ENCODE measurements at regions of chr15 and their contacts with region 1.

Region 1: GRCh38 chr15:51982013-51982769 is 10.6 kb upstream of the LEO1 start:
- DNase-seq: peak; percentile 57
- H3K4me3 Mint-ChIP-seq: peak overlapping the region; percentile 76
- H3K27ac Mint-ChIP-seq: peak overlapping the region; percentile 87
- H3K4me1 Mint-ChIP-seq: peaks cover 13% of the 10 kb centered on the region
- H3K27me3 Mint-ChIP-seq: peaks cover 3% of the 10 kb centered on the region

Region 2: GRCh38 chr15:52005748-52006701 is 23.8 kb after region 1 on chr15:
- intact Hi-C with region 1: loop called (anchors 1 kb)
- DNase-seq: no peak
- H3K4me3 Mint-ChIP-seq: peak overlapping the region; percentile 28
- H3K27ac Mint-ChIP-seq: peak overlapping the region; percentile 80
- H3K4me1 Mint-ChIP-seq: peaks cover 70% of the 10 kb centered on the region
- H3K27me3 Mint-ChIP-seq: no peaks in the 10 kb centered on the region

Region 3: DNA sequence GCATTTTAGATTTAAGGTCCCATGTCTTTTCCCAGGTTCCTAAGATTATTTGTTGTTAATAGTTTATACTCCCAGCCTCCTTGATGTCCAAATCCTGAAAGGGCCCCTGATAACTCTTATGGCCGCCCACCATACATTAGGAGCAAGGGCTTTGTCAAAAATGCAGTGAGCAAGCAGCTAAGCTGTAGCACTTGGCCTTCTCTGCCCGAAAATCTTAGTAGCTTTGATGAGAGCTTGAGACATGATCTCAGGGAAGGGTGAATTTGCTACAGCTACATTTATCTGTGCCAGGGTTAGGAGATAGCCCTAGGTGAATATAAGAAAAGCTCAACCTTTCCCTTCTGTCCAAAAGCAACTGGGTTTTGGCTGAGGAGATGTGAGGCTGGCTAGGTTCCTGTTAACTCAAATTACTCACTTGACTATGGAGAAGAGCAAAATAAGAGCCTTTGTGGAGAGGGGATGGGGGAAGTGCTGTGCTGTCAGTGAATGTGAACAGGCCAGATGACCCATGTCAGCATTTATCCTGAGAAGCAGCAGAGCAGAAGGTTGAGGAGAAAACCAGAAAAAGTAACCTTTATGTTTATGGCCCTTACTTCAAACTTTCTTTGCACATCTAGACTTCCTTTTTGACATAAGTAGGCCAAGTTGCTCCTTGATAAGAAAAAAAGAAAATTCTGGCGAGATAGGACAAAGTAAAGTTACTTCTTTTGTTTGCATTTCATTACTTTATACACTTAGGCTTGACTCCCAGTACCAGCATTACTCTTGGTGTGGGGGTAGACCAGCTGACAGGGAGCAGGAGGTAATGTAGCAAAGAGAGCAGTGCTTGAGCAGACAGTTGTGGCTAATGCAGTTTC is 58.0 kb after region 1 on chr15:
- intact Hi-C with region 1: loop called (anchors 1 kb)
- DNase-seq: no peak
- H3K4me3 Mint-ChIP-seq: no peak overlapping the region
- H3K27ac Mint-ChIP-seq: peak overlapping the region; percentile 4
- H3K4me1 Mint-ChIP-seq: peaks cover 54% of the 10 kb centered on the region
- H3K27me3 Mint-ChIP-seq: no peaks in the 10 kb centered on the region

Region 4: DNA sequence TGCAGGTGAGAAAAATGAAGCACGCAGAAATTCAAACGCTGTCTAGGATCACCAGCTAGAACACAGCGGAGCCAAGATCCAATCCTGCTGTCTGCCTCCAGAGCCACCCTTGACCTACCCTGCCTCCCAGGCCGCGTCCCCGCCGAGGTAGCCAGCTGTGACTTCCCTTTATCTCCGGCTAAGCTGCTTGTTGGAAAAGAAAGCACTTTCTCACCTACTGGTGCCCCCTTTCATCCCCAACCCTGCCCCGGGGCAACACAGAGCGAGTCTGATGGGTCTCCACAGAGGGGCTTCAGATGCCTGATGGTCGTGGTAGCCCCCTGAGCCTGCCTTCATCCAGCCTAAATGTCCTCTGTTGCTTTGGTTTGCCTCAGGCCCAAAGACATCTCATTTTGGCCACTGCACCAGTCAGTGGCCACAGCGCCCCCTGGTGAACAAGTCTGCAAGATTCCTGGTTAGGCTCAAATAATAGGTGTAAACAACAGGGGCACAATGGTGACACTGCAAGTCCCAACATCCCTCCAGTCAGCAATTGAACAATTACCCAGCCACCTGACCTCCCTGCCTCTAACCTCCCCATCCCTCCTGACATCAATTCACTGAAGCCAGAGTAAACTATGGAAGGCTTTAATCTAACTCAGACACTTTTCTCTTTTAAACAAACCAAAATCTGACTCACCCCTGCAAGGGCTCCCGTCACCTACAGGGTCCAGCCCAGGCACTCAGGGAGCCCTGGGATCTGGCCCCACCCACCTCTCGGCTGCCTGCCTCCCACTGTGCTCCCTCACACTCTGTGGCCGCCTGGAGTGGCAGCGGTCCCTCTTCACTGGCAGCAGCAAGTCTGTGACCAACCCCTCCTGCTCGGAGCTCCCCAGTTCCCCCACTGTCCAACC is 157.7 kb after region 1 on chr15:
- intact Hi-C with region 1: loop called (anchors 1 kb)
- DNase-seq: peak; percentile 53
- H3K4me3 Mint-ChIP-seq: no peak overlapping the region
- H3K27ac Mint-ChIP-seq: peak overlapping the region; percentile 4
- H3K4me1 Mint-ChIP-seq: peaks cover 7% of the 10 kb centered on the region
- H3K27me3 Mint-ChIP-seq: no peaks in the 10 kb centered on the region

Region 5: GRCh38 chr15:52179278-52180195 is 197.3 kb after region 1 on chr15:
- intact Hi-C with region 1: loop called (anchors 1 kb)
- DNase-seq: peak; percentile 87
- H3K4me3 Mint-ChIP-seq: peak overlapping the region; percentile 90
- H3K27ac Mint-ChIP-seq: peak overlapping the region; percentile 94
- H3K4me1 Mint-ChIP-seq: peaks cover 37% of the 10 kb centered on the region
- H3K27me3 Mint-ChIP-seq: no peaks in the 10 kb centered on the region

Region 6: DNA sequence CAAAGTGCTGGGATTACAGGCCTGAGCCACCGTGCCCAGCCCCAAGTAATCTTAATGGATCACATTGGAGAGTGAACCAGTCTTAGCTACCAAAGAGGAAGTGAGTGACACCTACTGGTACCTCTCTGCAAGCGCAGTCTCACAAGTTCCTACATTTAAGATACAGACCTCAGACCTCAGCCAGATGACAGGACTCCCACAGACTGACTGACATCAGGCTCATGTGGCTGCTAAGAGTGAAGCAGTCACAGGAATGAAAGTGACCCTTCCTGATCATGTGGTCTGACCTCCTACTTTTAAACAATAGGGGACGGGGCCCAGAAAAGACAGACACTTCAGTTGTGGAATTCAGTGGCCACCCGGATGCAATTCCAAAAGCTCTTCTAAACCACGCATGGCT is 245.3 kb after region 1 on chr15:
- intact Hi-C with region 1: loop called (anchors 1 kb)
- DNase-seq: peak; percentile 58
- H3K4me3 Mint-ChIP-seq: no peak overlapping the region
- H3K27ac Mint-ChIP-seq: no peak overlapping the region
- H3K4me1 Mint-ChIP-seq: peaks cover 36% of the 10 kb centered on the region
- H3K27me3 Mint-ChIP-seq: no peaks in the 10 kb centered on the region

Measured in activated T-helper 1 cell treated with anti-CD3 and anti-CD28 coated beads, Interleukin-12 subunit alpha, Interleukin-12 subunit beta, Interleukin-2, Interleukin-4 antibody, amounts not matched to agents 30 ng/mL and 10 ng/mL and 1 ng/mL, durations not matched to agents 14 hours and 24 hours and 36 hours (primary cell).